ENCODE measurements at regions of chr2 and their contacts with region 1.

Region 1: DNA sequence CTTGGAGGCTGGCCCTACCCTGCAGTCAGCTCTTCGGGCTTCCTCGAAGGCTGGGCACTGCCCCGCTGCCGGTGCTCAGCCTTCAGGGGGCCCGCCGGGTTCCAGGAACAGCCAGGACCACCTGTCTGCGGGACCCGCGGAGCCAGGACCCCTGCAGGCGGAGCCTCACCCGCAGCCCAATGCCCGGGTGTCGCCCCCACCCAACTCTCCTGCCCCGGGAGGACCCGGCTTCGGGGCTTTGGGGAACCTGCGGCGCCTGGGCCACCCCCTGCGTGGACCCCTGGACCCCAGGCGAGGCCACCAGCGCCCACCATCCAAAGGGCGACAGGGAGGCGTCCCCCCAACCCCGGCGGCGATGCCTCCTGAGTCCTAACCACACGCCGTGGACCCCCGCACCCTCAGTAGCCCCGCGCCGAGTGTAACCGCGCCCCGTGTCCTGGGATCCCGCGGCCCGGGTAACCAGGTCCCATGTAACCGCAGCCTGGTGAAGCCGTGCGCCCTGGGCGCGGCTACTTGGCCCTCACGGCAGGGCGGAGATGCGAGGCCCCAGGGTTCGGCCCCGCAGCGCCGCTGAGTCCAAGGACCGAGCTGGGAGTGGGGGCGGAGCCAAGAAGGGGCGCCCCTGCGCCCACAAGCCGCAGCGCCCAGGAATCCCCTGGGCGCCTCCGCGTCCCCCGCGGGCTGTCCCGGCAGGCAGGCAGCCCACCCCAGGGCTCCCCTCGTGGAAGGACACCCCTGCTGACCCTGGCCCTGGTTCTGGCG is 11.0 kb upstream of the UBE2F start:
- DNase-seq: no peak
- ATAC-seq: no peak

Region 2: DNA sequence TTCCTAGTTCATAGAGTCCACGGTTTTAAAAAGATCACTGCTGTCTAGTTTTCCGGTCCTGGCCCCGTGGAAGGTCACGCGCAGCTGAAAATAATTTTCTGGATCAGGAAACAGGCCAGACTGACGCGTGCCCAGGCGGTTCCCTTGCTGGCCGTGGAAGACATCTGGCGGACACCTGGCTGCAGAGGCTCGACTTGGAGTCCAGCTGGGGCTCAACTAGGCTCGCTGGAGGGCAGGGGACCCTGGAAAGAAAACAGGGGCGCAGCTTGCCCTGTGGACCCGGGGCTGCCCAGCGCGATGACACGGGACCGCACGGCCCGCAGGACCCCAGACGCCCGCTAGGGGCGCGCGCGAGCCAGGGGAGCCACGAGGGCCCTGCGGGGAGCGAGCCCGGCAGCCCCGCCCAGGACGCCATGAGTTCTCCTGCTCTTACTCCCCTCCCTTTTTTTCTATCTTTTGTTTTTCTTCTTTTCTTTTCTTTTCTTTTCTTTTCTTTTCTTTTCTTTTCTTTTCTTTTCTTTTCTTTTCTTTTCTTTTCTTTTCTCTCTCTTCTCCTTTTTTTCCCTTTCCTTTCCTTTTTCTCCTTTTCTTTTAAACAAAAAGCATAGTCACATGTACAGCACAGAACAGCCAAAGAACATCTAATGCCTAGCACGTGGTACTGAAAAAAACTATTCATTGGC is 32.2 kb before region 1 on chr2:
- intact Hi-C with region 1: loop called (anchors 5 kb)
- DNase-seq: peak; percentile 86
- ATAC-seq: peak; percentile 98

Region 3: DNA sequence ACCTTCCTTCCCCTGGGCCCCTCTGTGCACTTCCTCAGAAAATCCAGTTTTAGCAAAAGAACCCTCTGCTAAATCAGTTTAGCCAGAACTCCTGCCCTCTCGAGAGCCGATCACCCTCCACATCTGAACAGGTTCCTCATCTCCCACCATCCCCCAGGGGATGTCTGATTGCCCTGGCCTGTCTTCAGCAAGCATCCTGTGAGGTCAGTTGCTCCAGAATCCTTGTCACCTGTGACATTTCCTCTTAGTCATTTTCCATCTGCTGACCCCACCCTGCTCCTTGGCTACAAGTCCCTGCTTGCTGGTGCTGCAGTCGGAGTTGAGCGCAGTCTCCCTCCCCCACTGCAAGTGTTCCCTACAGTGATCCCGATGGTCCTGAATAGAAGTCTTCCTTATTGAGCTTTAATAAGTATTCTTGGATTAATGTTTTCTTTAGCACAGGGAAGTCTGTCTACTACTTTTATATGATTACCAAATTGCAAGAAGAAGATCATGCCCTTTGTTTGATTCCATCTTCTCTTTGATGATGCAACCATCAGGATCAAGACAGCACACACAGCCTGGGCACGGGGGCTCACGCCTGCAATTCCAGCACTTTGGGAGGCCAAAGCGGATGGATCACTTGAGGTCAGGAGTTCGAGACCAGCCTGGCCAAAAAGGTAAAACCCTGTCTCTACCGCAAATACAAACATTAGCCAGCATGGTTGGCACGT is 19.9 kb before region 1 on chr2:
- intact Hi-C with region 1: no loop called
- DNase-seq: no peak
- ATAC-seq: peak; percentile 29

Measured in Right ventricle myocardium superior (tissue), 1 donor.